Pancreas (tissue), 10 donors: ENCODE measurements at regions of chr7 and their contacts with region 1.

Region 1: DNA sequence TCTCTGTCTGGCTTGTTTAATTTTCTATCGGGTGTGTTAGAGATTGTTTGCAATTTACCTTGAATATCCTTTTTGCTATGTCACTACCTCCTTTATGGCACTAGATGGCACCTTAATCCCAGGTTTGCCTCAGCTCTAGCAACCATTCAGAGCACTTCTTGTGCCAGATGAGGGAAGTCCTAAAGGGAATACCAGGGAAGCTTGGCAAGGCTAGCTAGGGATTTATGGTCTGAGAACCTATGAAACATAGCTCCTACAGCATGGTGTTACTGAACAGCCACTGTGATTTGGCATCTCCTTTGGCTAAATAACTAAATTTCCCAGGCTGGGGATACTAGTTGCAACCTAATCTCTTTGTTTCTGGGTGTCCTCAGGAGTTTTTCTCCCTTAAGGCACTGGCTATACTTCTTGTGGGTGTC is 69.0 kb upstream of the VOPP1 start:
- DNase-seq: peak in 3 of 6 donors; percentile 57 to 66 (median 60)
- ATAC-seq: peak; percentile 99 to 100 (median 100)
- H3K4me3 ChIP-seq: no peak overlapping the region
- H3K27ac ChIP-seq: no peak overlapping the region
- H3K4me1 ChIP-seq: peaks cover 0 to 10% (median 4%) of the 10 kb centered on the region in 3 donors
- H3K27me3 ChIP-seq: peaks cover 0 to 5% (median 0%) of the 10 kb centered on the region in 4 donors
- CTCF ChIP-seq: peak; percentile 40 to 76 (median 65)

Region 2: DNA sequence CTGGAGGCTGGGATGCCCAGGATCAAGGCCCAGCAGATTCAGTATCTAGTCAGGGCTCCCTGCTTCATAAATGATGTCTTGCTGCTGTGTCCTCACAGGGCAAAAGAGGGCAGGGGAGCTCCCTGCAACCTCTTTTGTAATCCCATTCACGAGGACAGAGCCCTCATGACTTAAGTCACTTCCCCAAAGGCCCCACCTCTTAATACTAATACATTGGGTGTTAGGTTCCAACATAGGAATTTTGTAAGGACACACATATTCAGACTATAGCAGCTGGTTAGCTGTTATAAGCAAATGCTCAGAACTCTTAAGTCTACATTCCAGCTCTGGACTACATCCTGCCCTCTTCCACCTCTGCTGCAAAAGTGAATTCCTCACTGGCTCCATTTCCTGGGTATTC is 132.0 kb before region 1 on chr7:
- intact Hi-C with region 1: no loop called
- DNase-seq: no peak
- ATAC-seq: peak in 2 of 4 donors; percentile 45 to 54
- H3K4me3 ChIP-seq: no peak overlapping the region
- H3K27ac ChIP-seq: no peak overlapping the region
- H3K4me1 ChIP-seq: no peaks in the 10 kb centered on the region
- H3K27me3 ChIP-seq: no peaks in the 10 kb centered on the region
- CTCF ChIP-seq: no peak

Region 3: GRCh38 chr7:55733241-55734140 is 92.2 kb after region 1 on chr7:
- intact Hi-C with region 1: no loop called
- DNase-seq: no peak
- ATAC-seq: peak in 3 of 4 donors; percentile 50 to 62 (median 53)
- H3K4me3 ChIP-seq: no peak overlapping the region
- H3K27ac ChIP-seq: peak overlapping the region in 2 of 4 donors; percentile 19 to 41
- H3K4me1 ChIP-seq: no peaks in the 10 kb centered on the region
- H3K27me3 ChIP-seq: no peaks in the 10 kb centered on the region
- CTCF ChIP-seq: no peak

Region 4: DNA sequence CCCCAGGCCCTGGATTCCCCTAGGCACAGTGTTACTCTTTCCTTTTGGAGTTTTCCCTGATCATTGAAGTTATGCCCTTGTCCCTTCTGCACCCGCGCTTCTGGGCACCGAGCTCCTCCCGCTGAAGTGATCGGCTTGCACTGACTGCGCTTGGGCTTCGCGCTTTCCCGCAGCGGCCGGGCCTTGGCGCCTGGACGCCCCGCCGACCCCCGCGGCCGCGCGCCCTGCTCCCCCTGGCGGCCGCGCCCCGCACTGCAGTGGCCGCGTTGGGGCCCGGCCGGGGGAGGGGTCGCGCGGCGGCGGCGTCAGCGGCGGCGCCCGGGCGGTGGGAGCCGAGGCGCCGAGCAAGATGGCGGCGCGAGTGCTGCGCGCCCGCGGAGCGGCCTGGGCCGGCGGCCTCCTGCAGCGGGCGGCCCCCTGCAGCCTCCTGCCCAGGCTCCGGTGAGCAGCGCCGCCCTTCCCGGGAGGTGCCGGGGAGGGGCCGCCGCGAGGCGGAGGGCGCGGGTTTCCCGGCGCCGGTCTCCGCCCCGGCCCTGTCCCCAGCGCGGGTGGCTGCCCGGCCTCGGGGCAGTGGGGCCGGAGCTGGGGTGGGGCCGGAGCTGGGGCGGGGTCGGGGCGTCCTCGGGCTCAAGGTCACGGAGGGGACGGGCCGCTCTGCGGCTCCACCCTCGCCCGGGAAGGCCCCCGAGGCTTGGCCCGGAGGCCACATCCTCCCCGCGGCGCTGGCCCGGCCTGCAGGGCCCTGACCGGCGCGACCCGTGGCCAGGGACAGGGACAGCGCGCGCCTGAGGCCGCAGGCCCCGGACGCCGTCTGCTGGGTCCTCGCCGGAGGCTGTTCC is 323.2 kb after region 1 on chr7 and contains the start of gene NIPSNAP2:
- intact Hi-C with region 1: loop called in 1 of 3 experiments (anchors 10 kb)
- DNase-seq: peak; percentile 82 to 93 (median 89)
- ATAC-seq: peak; percentile 89 to 95 (median 92)
- H3K4me3 ChIP-seq: peak within 1 kb of the TSS; percentile 16 to 63 (median 50)
- H3K27ac ChIP-seq: peak within 1 kb of the TSS; percentile 66 to 90 (median 86)
- H3K4me1 ChIP-seq: peaks cover 3 to 24% (median 12%) of the 10 kb centered on the region in 3 donors
- H3K27me3 ChIP-seq: no peaks in the 10 kb centered on the region
- CTCF ChIP-seq: peak; percentile 8 to 38 (median 20)
- total RNA-seq, gene NIPSNAP2: 18.7 to 31.1 (median 25.8) TPM

Region 5: DNA sequence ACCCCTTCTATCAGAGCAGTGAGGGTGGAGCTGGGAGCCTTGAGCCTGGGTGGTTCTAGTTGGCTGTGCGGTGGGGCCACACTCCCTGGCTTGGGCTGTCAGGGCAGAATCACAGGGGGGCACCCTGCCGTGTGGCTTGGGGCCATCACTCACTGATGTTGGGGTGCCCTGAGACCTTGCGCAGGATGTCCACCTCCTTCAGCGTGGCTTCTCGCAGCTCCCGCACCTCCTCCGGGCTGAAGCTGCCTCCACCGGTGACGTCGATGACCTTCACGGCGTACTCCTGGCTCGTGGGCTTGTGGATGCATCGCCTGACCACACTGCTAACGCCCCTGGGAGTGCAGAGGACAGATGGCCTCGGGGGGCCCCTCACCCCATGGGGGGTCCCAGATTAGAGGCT is 446.2 kb after region 1 on chr7:
- intact Hi-C with region 1: loop called in 1 of 3 experiments (anchors 5 kb)
- DNase-seq: peak in 1 of 6 donors; percentile 51
- ATAC-seq: no peak
- H3K4me3 ChIP-seq: no peak overlapping the region
- H3K27ac ChIP-seq: no peak overlapping the region
- H3K4me1 ChIP-seq: peaks cover 0 to 6% (median 0%) of the 10 kb centered on the region in 3 donors
- H3K27me3 ChIP-seq: no peaks in the 10 kb centered on the region
- CTCF ChIP-seq: no peak